ENCODE measurements at regions of chr16 and their contacts with region 1.

Region 1: DNA sequence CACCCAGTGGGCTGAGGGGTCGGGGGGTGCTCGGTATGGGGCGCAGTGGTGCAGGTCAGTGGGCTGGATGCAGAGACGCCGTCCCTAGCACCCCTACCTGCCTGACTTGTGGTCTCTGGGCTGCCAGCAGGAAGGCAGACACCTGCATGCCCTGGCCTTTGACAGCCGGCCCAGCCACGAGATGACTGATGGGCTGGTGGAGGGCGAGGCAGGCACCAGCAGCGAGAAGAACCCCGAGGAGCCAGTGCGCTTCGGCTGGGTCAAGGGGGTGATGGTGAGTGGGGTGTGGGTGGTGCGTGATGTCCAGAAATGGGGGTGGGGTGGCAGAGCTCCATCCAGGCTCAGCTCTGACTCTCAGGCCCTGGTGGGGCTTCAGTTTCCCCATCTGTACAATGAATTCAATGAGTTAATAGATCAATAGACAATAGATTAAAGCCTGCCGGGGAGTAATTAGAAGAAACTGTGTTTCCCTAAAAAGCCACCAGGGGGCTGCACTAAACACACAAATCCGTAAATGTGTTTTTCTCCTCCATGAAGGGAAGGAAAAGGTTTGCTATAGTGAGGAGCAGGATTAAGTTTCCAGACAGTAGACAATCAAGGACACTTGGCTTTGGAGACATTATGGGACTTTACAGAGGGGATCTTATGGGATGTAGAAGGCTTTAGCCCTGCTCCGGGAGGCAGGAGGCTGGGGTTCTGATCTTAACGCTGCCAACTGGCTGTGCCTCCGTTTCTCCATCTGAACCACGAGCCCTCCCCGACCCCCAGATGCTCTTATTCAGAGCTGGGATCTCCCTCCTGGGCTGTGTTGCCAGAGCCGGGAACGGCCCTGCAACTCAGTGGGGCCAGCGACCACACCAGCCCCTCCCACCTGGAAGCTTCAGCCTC is 2.2 kb downstream of the SLC12A3 start:
- DNase-seq: peak; percentile 37
- H3K4me3 ChIP-seq: no peak overlapping the region
- H3K27ac ChIP-seq: no peak overlapping the region
- H3K4me1 ChIP-seq: peaks cover 0 to 10% (median 0%) of the 10 kb centered on the region in 4 donors
- H3K27me3 ChIP-seq: no peaks in the 10 kb centered on the region
- CTCF ChIP-seq: peak; percentile 81 to 84 (median 83)
- EP300 ChIP-seq: no peak
- POLR2A ChIP-seq: no peak

Region 2: DNA sequence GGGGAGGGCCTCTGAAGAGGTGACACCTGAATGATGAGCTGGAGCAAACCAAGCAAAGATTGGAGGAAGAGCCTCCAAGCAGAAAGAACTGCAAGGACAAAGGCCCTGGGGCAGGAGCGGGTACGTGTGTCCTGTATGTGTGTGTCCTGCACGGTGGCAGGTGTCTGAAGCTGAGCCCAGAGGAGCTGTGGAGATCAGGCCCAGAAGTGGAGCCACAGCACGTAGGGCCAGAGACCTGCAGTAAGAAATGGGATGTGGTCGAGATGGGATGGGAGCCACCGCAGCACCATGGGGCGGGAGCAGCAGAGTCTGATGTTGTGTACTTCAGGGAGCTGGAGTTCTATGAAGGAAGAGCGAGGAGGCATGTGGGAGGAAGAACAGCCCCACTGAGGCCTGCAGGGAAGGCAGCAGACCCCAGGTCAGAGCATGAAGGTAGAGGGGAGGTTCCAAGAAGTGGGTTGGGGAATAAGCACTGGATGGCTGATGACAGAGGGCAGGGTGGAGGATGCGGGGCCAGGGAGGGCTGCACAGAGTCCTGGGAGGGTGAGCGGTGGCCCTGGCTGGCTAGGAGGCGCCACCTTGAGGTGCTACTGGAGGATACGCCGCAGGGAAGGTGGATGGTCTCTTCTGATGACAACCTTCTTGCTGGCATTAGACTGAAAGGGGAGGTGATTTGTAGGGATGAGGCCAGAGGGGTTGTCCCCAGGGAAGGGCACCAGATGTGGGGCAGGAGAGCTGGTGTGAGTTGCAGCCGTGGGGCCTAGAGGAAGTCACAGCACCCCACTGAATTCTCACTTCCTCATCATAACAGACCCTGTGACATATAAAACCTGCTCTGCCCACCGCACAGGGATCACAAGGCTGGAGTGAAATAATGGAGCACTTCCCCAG is 83.9 kb after region 1 on chr16:
- in situ Hi-C with region 1: loop called in 3 of 4 experiments (anchors 5 to 10 kb)
- intact Hi-C with region 1: no loop called
- DNase-seq: peak; percentile 59
- H3K4me3 ChIP-seq: no peak overlapping the region
- H3K27ac ChIP-seq: no peak overlapping the region
- H3K4me1 ChIP-seq: no peaks in the 10 kb centered on the region
- H3K27me3 ChIP-seq: no peaks in the 10 kb centered on the region
- CTCF ChIP-seq: peak; percentile 38 to 69 (median 47)
- EP300 ChIP-seq: no peak
- POLR2A ChIP-seq: no peak

Region 3: GRCh38 chr16:56980792-56981724 is 113.9 kb after region 1 on chr16:
- in situ Hi-C with region 1: no loop called
- intact Hi-C with region 1: no loop called
- DNase-seq: no peak
- H3K4me3 ChIP-seq: no peak overlapping the region
- H3K27ac ChIP-seq: no peak overlapping the region
- H3K4me1 ChIP-seq: peaks cover 0 to 31% (median 20%) of the 10 kb centered on the region in 4 donors
- H3K27me3 ChIP-seq: no peaks in the 10 kb centered on the region
- CTCF ChIP-seq: no peak
- EP300 ChIP-seq: no peak
- POLR2A ChIP-seq: no peak

Region 4: GRCh38 chr16:57045694-57046381 is 178.7 kb after region 1 on chr16:
- in situ Hi-C with region 1: loop called in 1 of 4 experiments (anchors 25 kb)
- intact Hi-C with region 1: loop called (anchors 10 kb)
- DNase-seq: peak; percentile 57
- H3K4me3 ChIP-seq: no peak overlapping the region
- H3K27ac ChIP-seq: no peak overlapping the region
- H3K4me1 ChIP-seq: peaks cover 0 to 8% (median 0%) of the 10 kb centered on the region in 4 donors
- H3K27me3 ChIP-seq: no peaks in the 10 kb centered on the region
- CTCF ChIP-seq: peak; percentile 30 to 45 (median 39)
- EP300 ChIP-seq: no peak
- POLR2A ChIP-seq: no peak

Region 5: DNA sequence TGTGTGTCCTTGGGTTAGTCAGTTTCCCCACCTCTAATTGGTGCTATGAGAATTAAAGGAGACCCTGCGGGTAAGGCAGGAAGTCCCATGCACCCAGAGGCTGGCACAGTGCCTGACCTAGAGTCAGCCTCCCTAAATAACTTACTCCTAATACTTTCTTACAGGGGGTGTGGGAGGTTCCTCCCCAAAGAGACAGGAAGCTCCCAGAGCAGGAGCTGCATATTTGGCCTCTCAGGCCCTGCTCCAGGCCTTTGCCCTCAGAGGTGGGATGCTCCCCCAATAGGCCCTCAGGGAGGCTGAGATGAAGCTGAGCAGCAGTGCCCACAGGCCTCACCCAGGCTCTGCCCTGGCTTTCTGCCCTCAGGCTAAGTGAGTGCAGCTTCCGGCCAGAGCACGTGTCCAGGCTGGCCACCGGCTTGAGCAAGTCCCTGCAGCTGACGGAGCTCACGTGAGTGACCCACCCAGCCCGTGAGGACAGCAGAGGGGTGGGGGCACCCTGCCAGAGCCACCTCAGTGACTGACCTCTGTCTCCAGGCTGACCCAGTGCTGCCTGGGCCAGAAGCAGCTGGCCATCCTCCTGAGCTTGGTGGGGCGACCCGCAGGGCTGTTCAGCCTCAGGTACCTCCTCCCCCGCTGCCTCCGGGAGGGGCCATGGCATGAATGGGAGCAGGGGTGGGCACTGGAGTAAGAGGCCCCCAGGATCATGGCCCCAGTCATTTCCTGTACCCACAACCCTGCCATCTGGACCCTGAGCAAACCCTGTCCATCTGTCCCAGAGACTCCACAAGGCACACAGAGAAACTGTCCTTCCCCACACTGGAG is 194.1 kb after region 1 on chr16:
- in situ Hi-C with region 1: loop called in 1 of 4 experiments (anchors 25 kb)
- intact Hi-C with region 1: no loop called
- DNase-seq: peak; percentile 35
- H3K4me3 ChIP-seq: no peak overlapping the region
- H3K27ac ChIP-seq: peak overlapping the region; percentile 21 to 69 (median 51)
- H3K4me1 ChIP-seq: peaks cover 0 to 10% (median 2%) of the 10 kb centered on the region in 4 donors
- H3K27me3 ChIP-seq: no peaks in the 10 kb centered on the region
- CTCF ChIP-seq: no peak
- EP300 ChIP-seq: no peak
- POLR2A ChIP-seq: no peak

Region 6: GRCh38 chr16:57167953-57168352 is 300.8 kb after region 1 on chr16:
- in situ Hi-C with region 1: loop called in 1 of 4 experiments (anchors 25 kb)
- intact Hi-C with region 1: no loop called
- DNase-seq: no peak
- H3K4me3 ChIP-seq: no peak overlapping the region
- H3K27ac ChIP-seq: peak overlapping the region in 1 of 4 donors; percentile 14
- H3K4me1 ChIP-seq: peaks cover 0 to 10% (median 0%) of the 10 kb centered on the region in 4 donors
- H3K27me3 ChIP-seq: no peaks in the 10 kb centered on the region
- CTCF ChIP-seq: peak; percentile 42 to 62 (median 54)
- EP300 ChIP-seq: no peak
- POLR2A ChIP-seq: no peak

Measured in transverse colon (tissue), 4 donors.